Activated B cell treated with CpG ODN at 0.5 μM for 24 hours (primary cell): ENCODE measurements at regions of chr2 and their contacts with region 1.

Region 1: GRCh38 chr2:65031341-65032018 is 24.7 kb upstream of the CEP68 start:
- DNase-seq: no peak
- ATAC-seq: peak; percentile 8
- H3K4me3 Mint-ChIP-seq: peak overlapping the region; percentile 80
- H3K27ac Mint-ChIP-seq: peak overlapping the region; percentile 86
- H3K4me1 Mint-ChIP-seq: peaks cover 66% of the 10 kb centered on the region
- H3K27me3 Mint-ChIP-seq: no peaks in the 10 kb centered on the region
- CTCF ChIP-seq: no peak

Region 2: GRCh38 chr2:64586883-64587481 is 444.5 kb before region 1 on chr2:
- CTCF ChIA-PET with region 1: interaction called, 3 read pairs
- POLR2A ChIA-PET with region 1: no interaction called
- intact Hi-C with region 1: loop called (anchors 5 kb)
- DNase-seq: no peak
- ATAC-seq: peak; percentile 62
- H3K4me3 Mint-ChIP-seq: no peak overlapping the region
- H3K27ac Mint-ChIP-seq: peak overlapping the region; percentile 50
- H3K4me1 Mint-ChIP-seq: peaks cover 17% of the 10 kb centered on the region
- H3K27me3 Mint-ChIP-seq: no peaks in the 10 kb centered on the region
- CTCF ChIP-seq: peak; percentile 77

Region 3: DNA sequence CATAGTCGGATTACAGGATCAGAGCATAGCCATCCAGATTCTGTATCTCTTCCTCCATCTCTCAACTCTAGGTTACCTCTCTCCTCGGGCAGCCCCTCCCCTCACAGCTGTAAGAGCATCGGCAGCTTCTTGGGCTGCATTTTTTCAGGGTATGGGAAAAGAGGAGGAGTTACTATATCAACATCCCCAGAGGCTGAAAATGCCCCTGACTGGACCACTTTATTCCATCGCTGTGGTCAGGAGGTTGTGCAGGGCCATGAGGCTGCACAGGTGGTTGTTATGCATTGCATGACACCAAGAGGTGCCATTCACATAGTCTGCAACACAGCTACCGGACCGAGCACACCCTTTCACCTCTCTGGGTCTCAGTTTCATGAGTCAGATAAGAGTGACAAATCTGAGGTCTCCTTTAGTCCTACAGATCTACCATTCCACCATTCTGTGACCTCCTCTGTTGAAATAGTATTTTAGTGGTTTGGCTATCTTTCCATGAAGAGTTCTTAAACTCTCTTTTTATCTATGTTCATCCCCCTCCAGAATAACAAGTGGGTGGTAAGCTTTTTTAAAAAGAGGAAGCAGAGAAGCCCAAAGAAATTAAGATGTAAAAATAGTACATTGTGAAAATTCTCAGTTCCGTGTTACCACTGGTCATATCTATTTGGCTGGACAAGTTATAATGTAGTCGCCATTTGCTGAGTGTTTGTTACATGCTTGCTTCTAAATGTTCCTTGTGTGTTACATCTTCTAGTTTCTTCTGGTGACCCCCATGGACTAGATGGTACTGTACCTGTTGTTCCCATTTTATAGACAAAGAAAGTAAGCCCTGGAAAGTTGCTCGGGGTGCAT is 98.9 kb before region 1 on chr2:
- CTCF ChIA-PET with region 1: interaction called, 3 read pairs
- POLR2A ChIA-PET with region 1: interaction called, 12 read pairs
- intact Hi-C with region 1: no loop called
- DNase-seq: no peak
- ATAC-seq: peak; percentile 81
- H3K4me3 Mint-ChIP-seq: peak overlapping the region; percentile 90
- H3K27ac Mint-ChIP-seq: peak overlapping the region; percentile 93
- H3K4me1 Mint-ChIP-seq: peaks cover 97% of the 10 kb centered on the region
- H3K27me3 Mint-ChIP-seq: no peaks in the 10 kb centered on the region
- CTCF ChIP-seq: no peak

Region 4: DNA sequence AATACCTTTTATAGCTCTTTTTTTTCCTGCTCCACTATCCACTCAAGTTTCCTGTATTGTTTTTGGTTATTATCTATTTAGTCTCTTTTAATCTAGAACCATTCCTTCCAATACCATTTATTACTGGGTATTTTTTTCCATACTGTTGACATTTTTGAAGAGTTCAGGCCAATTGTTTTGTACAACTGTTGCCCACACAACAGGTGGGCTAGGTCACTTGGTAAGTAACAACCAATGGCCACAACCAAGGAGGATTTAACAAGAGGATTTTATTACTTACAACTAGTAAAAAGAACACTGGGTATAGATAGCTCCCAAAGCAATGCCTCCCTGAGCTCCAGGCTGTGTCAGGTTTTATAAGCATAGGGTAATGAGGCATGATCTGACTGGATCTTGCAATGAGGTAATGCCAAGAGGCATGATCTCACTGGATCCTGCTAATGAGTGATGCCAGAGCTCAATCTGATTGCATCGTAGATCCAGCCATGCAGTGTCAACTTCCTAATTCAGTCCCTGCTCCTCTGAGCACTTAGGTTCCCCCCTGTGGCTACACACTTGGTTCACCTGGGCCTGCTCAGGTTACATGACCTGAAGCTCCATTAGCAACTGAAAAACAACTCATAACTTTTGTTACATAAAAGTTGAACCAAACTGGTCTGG is 17.7 kb after region 1 on chr2:
- CTCF ChIA-PET with region 1: interaction called, 3 read pairs
- POLR2A ChIA-PET with region 1: interaction called, 11 read pairs
- intact Hi-C with region 1: loop called (anchors 1 kb)
- DNase-seq: no peak
- ATAC-seq: no peak
- H3K4me3 Mint-ChIP-seq: no peak overlapping the region
- H3K27ac Mint-ChIP-seq: no peak overlapping the region
- H3K4me1 Mint-ChIP-seq: peaks cover 40% of the 10 kb centered on the region
- H3K27me3 Mint-ChIP-seq: no peaks in the 10 kb centered on the region
- CTCF ChIP-seq: no peak

Region 5: DNA sequence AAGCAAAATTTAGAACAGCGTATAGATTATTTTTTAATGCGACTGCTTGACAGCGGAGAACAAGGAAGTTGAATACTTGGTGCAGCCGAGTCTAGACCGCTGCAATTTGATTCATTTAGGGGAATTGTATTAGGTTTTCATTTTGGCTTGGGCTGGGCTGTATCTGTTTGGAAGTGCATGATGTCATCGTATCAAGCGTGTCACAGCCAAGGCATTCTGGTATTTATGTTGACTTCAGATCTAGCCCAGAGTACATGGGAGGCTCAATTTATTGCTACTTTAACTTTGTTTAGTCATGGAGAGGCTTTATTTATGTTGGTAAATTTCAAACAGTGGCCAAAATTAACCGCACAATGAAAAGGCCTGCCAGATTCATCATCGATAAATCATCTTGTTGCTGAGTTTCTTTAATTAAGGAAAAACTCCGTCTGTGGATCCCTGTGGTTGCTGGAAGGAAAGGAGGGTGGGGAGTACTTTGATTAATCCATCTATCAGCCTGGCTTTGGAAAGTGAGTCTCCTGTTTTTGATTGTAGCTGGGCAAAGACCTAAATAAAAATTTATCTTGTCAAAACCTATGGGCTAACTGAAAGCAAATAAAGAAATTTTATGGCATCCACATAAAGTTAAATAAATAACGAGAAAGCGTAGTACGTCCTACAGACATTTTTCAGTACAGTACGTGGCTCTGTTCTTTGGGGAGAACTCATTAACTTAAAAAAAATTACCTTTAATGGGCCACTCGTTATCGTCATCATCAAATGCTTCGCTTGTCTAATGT is 631.4 kb after region 1 on chr2:
- CTCF ChIA-PET with region 1: no interaction called
- POLR2A ChIA-PET with region 1: no interaction called
- intact Hi-C with region 1: no loop called
- DNase-seq: no peak
- ATAC-seq: no peak
- H3K4me3 Mint-ChIP-seq: peak overlapping the region; percentile 19
- H3K27ac Mint-ChIP-seq: no peak overlapping the region
- H3K4me1 Mint-ChIP-seq: no peaks in the 10 kb centered on the region
- H3K27me3 Mint-ChIP-seq: peaks cover 11% of the 10 kb centered on the region
- CTCF ChIP-seq: no peak